HepG2 (cell line): ENCODE measurements at regions of chr17 and their contacts with region 1.

Region 1: DNA sequence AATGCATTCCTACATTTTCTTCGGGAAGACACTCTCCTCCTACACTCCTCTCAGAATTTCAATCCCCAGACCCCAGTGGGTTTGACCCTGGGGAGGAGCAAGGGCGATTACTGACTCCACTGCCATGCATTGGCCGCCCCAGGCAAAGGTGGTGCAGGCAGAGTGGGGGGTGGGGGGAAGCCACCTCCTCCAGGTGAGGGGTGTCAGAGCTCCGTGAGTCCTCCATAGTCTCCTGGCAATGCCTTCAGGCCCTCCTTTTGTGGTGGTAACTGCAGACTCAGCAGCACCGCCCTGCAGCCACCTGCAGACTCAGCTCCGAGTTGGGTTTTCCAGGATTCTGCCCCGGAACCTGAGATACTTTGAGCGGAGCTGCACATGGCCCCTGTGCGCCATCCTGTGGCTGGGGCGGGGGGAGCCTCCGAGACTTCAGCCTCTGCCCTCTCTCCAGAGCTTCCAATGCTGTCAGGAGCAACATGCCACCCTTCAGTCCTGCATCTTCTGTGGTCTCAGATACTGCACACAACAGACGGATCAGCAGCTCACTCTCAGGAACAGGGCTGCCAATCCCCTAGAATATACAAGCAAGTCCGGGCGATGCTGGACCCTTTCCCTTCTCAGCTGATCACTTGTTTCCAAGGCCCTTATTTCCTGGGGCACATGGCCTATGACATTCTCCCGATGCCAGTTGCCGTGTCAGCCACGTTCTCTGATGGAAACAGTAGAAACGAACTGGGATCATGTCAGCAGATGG is 2.4 kb upstream of the SLC47A2 start:
- DNase-seq: peak; percentile 38
- ATAC-seq: peak; percentile 60
- H3K4me3 ChIP-seq: no peak overlapping the region; a peak in 1 of 6 replicates
- H3K27ac ChIP-seq: no peak overlapping the region
- H3K4me1 ChIP-seq: peaks cover 71% of the 10 kb centered on the region
- H3K27me3 ChIP-seq: peaks cover 0 to 4% of the 10 kb centered on the region in 2 experiments; a peak in 2 of 5 replicates
- CTCF ChIP-seq: peak; percentile 84
- EP300 ChIP-seq: no peak
- POLR2A ChIP-seq: no peak
- RAD21 ChIP-seq: peak; percentile 85

Region 2: GRCh38 chr17:19513897-19514488 is 204.8 kb before region 1 on chr17:
- CTCF ChIA-PET with region 1: interaction called, 4 read pairs
- POLR2A ChIA-PET with region 1: no interaction called
- in situ Hi-C with region 1: loop called (anchors 25 kb)
- intact Hi-C with region 1: loop called (anchors 1 kb)
- DNase-seq: peak; percentile 68
- ATAC-seq: peak; percentile 87
- H3K4me3 ChIP-seq: no peak overlapping the region
- H3K27ac ChIP-seq: no peak overlapping the region
- H3K4me1 ChIP-seq: peaks cover 58% of the 10 kb centered on the region
- H3K27me3 ChIP-seq: no peaks in the 10 kb centered on the region
- CTCF ChIP-seq: peak; percentile 92
- EP300 ChIP-seq: no peak
- POLR2A ChIP-seq: no peak
- RAD21 ChIP-seq: peak; percentile 90